ENCODE measurements at regions of chr12 and their contacts with region 1.

Region 1: DNA sequence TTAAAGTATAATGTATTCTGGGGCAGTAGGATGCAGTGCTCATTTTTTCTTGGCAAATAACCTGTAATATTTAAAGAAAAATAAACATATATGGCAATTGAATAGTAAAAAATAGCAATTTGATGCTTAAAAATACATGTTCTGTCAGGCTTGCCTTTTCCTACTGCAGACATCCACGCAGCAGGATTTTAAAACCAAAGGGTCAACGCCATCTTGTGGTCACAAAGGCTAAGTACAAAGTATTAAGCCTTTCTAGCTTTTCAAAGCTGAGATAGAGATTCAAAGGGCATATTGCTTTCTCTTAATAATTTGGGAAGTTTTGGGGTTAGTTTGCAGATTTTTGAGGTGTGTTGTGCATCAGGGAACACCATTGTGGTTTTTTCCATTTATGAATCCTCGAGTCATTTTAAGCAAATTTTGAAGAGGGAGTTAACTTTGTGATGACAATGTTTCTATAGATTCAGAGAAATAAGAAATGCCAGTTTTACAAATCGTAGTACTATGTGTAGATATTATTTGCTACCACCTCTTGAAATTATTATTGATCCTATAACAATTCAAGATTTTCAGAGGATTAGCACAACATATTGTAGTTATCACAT is 4.7 kb upstream of the CCER1 start:
- DNase-seq: peak; percentile 27
- ATAC-seq: peak; percentile 51
- H3K4me3 Mint-ChIP-seq: no peak overlapping the region
- H3K27ac Mint-ChIP-seq: no peak overlapping the region
- H3K4me1 Mint-ChIP-seq: no peaks in the 10 kb centered on the region
- H3K27me3 Mint-ChIP-seq: no peaks in the 10 kb centered on the region

Region 2: DNA sequence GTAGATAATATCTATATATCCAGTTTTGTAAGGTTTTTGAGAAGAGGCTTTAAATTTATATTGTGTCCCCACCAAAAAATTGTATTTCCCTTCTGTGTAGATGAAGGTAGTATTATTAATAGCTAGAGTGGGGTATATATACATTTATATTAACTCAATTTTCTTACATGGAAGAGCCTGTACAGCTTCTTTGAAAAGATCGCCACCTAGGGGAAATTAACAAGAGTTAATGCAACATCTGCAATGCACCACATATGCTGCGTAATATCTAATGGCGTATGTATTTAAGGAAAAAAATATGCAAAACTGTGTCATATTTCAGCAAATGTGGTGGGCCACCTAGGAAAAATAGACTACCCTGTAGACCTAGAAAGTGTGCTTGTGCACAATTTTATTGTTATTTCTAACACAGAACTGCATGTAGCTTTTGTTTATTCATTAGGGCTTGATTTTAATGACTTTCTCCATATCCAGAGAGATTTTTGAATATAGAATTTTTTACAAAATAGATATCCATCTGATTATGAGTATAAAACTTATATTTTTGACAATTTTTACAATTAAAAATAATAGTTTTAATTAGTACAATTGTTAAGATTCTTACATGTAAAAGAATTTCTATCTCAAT is 18.7 kb before region 1 on chr12:
- CTCF ChIA-PET with region 1: interaction called, 10 read pairs
- POLR2A ChIA-PET with region 1: no interaction called
- intact Hi-C with region 1: no loop called
- DNase-seq: no peak
- ATAC-seq: no peak
- H3K4me3 Mint-ChIP-seq: no peak overlapping the region
- H3K27ac Mint-ChIP-seq: no peak overlapping the region
- H3K4me1 Mint-ChIP-seq: no peaks in the 10 kb centered on the region
- H3K27me3 Mint-ChIP-seq: peaks cover 4% of the 10 kb centered on the region

Region 3: DNA sequence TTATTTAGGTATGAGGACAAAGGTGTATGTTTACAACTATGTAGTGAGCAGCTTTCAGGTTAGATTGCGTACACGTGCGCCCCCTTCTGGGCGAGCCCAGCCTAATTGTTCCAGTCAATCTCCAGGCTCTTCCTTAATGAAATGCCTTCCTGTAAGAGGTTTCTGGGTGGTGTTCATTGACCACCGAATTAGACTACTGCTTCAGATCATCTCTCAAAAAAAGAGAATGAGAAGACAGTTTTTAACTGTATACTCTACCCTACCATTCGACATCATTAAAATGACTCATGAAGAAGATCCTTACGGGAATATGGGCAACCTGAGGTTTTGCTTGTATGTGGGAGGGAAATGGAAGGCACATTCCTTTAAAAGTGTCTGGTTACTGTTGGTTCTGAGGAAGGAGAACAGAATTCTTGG is 149.5 kb after region 1 on chr12:
- CTCF ChIA-PET with region 1: interaction called, 5 read pairs
- POLR2A ChIA-PET with region 1: no interaction called
- intact Hi-C with region 1: loop called in 1 of 2 experiments (anchors 5 kb)
- DNase-seq: peak; percentile 79
- ATAC-seq: no peak
- H3K4me3 Mint-ChIP-seq: no peak overlapping the region
- H3K27ac Mint-ChIP-seq: no peak overlapping the region
- H3K4me1 Mint-ChIP-seq: no peaks in the 10 kb centered on the region
- H3K27me3 Mint-ChIP-seq: peaks cover 5% of the 10 kb centered on the region

Measured in activated CD4-positive, alpha-beta T cell treated with anti-CD3 and anti-CD28 coated beads for 36 hours (primary cell).